Common myeloid progenitor, CD34-positive (primary cell): ENCODE measurements at regions of chr9 and their contacts with region 1.

Region 1: GRCh38 chr9:83526901-83527300 is 11.3 kb downstream of the FRMD3 start:
- DNase-seq: no peak
- H3K4me3 ChIP-seq: no peak overlapping the region
- H3K27ac ChIP-seq: no peak overlapping the region
- H3K4me1 ChIP-seq: no peaks in the 10 kb centered on the region
- H3K27me3 ChIP-seq: no peaks in the 10 kb centered on the region

Region 2: GRCh38 chr9:83538172-83538889 is 11.4 kb after region 1 on chr9 and contains the start of gene FRMD3:
- CTCF ChIA-PET with region 1: interaction called, 10 read pairs
- POLR2A ChIA-PET with region 1: no interaction called
- DNase-seq: peak; percentile 61 to 74 (median 63)
- H3K4me3 ChIP-seq: peak within 1 kb of the TSS; percentile 29 to 74 (median 54)
- H3K27ac ChIP-seq: no peak within 1 kb of the TSS
- H3K4me1 ChIP-seq: peaks cover 3 to 20% (median 15%) of the 10 kb centered on the region in 4 experiments
- H3K27me3 ChIP-seq: peaks cover 9 to 54% (median 22%) of the 10 kb centered on the region in 5 experiments